MCF 10A (cell line): ENCODE measurements at regions of chr18 and their contacts with region 1.

Region 1: DNA sequence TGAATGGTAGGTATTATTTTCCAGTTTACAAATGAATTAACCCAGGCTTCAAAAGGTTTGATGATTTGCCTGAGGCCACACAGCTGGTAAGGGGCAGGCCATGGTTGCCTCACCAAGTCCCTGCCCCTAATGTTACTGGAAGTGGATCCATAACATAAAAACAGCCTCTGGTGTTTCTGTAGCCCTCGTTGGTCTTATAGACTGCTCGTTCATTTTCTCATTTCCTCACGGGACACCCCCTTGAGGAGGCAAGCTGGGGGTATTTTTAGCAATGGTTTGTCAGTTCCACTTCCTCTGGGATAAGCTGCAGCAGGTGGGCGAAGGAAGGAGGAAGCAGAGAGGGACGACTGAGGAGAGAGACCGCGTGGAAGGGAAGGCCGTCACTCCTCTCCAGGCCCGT is 32.9 kb upstream of the NDUFV2 start:
- DNase-seq: no peak
- H3K4me3 Mint-ChIP-seq: no peak overlapping the region
- H3K27ac Mint-ChIP-seq: no peak overlapping the region
- H3K4me1 Mint-ChIP-seq: peaks cover 7% of the 10 kb centered on the region
- H3K27me3 Mint-ChIP-seq: no peaks in the 10 kb centered on the region
- CTCF ChIP-seq: no peak

Region 2: GRCh38 chr18:7303316-7304060 is 1766.1 kb before region 1 on chr18:
- CTCF ChIA-PET with region 1: no interaction called
- POLR2A ChIA-PET with region 1: no interaction called
- intact Hi-C with region 1: no loop called
- DNase-seq: no peak
- H3K4me3 Mint-ChIP-seq: no peak overlapping the region
- H3K27ac Mint-ChIP-seq: peak overlapping the region; percentile 4
- H3K4me1 Mint-ChIP-seq: peaks cover 11% of the 10 kb centered on the region
- H3K27me3 Mint-ChIP-seq: no peaks in the 10 kb centered on the region
- CTCF ChIP-seq: no peak

Region 3: DNA sequence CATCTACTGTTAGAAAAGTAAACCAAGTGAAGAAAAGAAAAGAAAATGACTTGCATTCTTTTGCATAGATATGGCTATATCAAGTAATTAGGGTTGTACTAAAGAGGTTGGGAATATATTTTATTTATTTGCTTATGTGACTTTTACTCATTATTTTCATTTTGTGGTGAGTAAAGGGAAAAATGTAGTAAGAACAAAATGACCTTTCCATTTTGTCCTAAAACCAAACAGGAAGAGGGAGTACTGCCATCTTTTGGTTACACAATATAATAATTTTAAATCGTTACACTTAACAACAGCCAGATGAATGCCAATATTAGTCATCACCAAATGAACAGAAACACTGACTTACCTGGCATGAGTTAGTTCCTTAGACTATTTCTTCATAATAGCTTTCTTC is 14.4 kb before region 1 on chr18:
- CTCF ChIA-PET with region 1: interaction called, 7 read pairs
- POLR2A ChIA-PET with region 1: interaction called, 10 read pairs
- intact Hi-C with region 1: no loop called
- DNase-seq: peak; percentile 90
- H3K4me3 Mint-ChIP-seq: peak overlapping the region; percentile 31
- H3K27ac Mint-ChIP-seq: peak overlapping the region; percentile 89
- H3K4me1 Mint-ChIP-seq: peaks cover 16% of the 10 kb centered on the region
- H3K27me3 Mint-ChIP-seq: no peaks in the 10 kb centered on the region
- CTCF ChIP-seq: no peak

Region 4: DNA sequence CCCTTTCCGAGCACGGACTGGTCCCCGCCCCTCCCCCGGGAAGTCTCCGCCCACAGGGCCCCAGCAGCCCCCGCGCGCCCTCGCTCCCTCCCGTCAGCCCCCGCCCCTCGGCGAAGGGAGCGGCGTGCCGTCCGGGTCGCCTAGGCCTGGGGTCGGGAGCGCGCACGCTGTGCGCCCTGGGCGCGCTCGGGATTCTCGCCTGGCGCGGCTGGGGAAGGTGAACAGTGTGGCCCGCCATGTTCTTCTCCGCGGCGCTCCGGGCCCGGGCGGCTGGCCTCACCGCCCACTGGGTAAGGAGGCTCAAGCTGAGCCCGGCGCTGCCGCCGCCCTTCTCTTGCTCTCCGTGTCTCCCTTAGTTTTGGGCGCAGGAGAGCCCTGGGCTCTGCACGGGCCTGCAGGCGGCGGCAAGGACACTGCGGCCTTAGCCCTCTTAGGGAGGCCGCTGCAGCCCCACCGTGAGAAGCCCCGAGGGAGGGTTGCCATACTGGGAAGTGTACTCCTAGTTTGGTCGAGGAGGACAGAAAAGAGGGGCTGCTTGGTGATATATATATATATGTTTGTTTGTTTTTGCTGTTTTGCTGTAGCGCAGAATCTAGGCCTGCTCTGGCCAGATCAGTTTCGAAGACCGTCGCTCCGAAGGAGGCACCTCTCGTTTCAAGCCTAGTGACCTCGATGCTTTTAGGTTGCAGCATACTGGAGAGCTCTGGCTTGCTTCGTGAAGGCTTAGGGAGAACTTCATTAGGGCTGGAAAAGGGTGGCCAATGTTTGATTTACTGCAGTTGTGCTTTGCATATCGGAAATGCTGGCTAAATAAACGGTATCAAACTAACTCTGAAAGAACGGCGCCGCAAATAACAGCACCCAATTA is 33.1 kb after region 1 on chr18 and contains the start of gene NDUFV2:
- CTCF ChIA-PET with region 1: interaction called, 9 read pairs
- POLR2A ChIA-PET with region 1: interaction called, 65 read pairs
- intact Hi-C with region 1: loop called (anchors 1 kb)
- DNase-seq: peak; percentile 96
- H3K4me3 Mint-ChIP-seq: peak within 1 kb of the TSS; percentile 80
- H3K27ac Mint-ChIP-seq: peak within 1 kb of the TSS; percentile 86
- H3K4me1 Mint-ChIP-seq: peaks cover 43% of the 10 kb centered on the region
- H3K27me3 Mint-ChIP-seq: no peaks in the 10 kb centered on the region
- CTCF ChIP-seq: no peak
- total RNA-seq, gene NDUFV2: 192 and 202 TPM in 2 replicates

Region 5: DNA sequence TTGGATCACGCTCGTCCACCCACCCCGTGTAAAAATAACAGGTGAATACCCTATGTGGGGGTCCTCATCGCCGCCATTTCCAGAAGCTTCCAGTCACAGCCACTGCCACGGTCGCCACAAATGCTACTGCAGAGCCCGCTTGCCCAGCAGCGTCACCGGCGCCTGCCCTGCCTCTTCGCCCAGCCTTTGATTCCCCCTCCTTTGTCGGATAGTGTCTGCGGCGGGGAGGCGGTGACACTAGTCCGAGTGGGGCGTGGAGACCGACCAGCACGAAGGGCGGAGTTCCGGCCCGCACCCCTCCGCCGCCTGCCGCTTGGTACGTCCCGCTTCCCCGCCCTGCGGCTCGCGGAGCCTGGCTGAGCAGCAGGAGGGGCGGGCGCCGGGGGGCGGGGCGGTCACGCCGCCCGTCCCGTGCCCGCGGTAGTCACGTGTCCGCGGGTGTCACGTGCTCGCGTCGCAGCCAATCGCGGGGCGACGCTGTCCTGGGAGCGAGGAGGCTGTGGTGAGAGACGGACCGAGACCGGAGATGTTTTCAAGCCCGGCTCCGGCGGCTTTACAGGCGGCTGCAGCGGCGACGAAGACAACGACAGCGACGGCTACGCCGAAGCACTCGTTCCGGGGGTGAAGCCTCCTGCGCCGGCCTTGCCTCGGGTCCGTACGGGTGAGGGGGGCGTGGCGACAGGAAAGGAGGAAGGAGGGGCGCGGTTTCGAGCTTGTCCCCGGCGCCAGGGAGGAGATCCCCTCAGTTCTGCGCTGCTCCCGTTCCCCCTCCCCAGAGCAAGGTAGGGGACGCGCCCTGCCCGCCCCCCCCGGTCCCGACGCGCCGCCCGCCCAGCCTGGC is 66.9 kb after region 1 on chr18 and contains the start of gene ANKRD12:
- CTCF ChIA-PET with region 1: interaction called, 9 read pairs
- POLR2A ChIA-PET with region 1: interaction called, 123 read pairs
- intact Hi-C with region 1: no loop called
- DNase-seq: peak; percentile 95
- H3K4me3 Mint-ChIP-seq: peak within 1 kb of the TSS; percentile 90
- H3K27ac Mint-ChIP-seq: peak within 1 kb of the TSS; percentile 94
- H3K4me1 Mint-ChIP-seq: peaks cover 32% of the 10 kb centered on the region
- H3K27me3 Mint-ChIP-seq: no peaks in the 10 kb centered on the region
- CTCF ChIP-seq: no peak
- total RNA-seq, gene ANKRD12: 25.3 and 36.7 TPM in 2 replicates

Region 6: DNA sequence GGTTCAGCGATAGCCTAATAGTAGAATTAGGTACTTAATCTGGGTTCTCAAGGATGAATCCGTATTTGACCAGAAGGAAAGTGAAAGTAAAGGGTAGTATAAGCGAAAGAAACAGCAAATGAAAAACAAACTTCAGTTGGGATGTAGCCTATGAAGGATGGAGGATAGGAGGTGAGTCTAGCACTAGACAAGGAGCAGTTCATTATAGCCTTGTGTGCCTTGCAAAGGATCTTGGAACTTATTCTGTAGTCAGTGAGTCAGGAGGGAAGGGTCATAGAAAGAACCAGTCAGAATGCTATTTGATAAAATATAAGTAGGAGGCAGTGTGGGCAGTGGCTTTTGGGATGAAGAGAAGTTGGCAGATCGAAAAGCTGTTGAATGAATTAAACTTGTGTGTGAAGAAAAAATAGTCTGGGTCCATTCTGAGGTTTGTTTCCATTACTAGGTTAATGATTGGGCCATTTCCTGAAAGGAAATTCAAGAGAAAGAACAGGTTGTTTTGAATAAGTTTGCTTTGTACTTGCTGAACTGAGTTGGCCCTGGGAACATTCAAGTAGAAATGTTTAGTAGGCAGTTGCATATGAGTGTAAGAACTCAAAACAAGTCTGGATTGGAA is 115.5 kb after region 1 on chr18:
- CTCF ChIA-PET with region 1: no interaction called
- POLR2A ChIA-PET with region 1: no interaction called
- intact Hi-C with region 1: no loop called
- DNase-seq: no peak
- H3K4me3 Mint-ChIP-seq: no peak overlapping the region
- H3K27ac Mint-ChIP-seq: no peak overlapping the region
- H3K4me1 Mint-ChIP-seq: peaks cover 6% of the 10 kb centered on the region
- H3K27me3 Mint-ChIP-seq: no peaks in the 10 kb centered on the region
- CTCF ChIP-seq: no peak

Region 7: GRCh38 chr18:9516437-9517064 is 446.9 kb after region 1 on chr18:
- CTCF ChIA-PET with region 1: interaction called, 6 read pairs
- POLR2A ChIA-PET with region 1: interaction called, 3 read pairs
- intact Hi-C with region 1: loop called (anchors 1 kb)
- DNase-seq: peak; percentile 52
- H3K4me3 Mint-ChIP-seq: no peak overlapping the region
- H3K27ac Mint-ChIP-seq: no peak overlapping the region
- H3K4me1 Mint-ChIP-seq: peaks cover 8% of the 10 kb centered on the region
- H3K27me3 Mint-ChIP-seq: no peaks in the 10 kb centered on the region
- CTCF ChIP-seq: peak; percentile 88